ENCODE measurements at regions of chr1 and their contacts with region 1.

Region 1: DNA sequence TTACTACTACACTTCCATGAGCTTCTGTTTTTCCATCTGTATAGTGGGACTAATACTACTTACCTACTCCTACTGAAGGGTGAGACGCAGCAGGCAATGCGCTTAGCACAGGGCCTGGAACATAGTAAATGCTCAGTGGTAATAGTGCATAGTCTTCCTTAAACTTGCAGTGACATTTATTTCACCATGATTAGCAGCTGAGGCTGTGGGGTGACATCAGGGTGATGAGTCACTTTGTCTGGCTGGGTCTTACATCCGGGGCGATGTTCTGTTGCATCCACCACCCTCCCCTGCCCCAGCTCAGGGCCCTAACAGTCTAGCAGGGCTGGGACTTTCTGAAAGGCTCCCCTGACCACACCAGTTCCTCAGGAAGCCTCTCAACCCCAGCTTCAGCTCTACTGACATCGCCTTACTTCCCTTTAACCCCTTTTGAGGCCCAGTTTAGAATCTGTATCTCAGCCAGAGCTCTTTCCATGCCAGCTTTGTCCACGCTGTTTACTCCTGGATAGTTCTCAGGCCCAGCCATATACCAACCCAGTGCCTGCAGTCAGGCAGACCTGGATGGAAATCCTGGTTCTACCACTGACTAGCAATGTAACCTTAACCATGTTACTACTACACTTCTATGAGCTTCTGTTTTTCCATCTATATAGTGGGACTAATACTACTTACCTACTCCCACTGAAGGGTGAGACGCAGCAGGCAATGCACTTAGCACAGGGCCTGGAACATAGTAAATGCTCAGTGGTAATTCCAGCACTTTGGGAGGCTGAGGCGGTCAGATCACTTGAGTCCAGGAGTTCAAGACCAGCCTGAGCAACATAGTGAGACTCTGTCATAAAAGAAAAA is 66.3 kb downstream of the CD58 start:
- H3K4me3 Mint-ChIP-seq: no peak overlapping the region
- H3K27ac Mint-ChIP-seq: peak overlapping the region; percentile 87
- H3K4me1 Mint-ChIP-seq: peaks cover 71% of the 10 kb centered on the region
- H3K27me3 Mint-ChIP-seq: no peaks in the 10 kb centered on the region

Region 2: DNA sequence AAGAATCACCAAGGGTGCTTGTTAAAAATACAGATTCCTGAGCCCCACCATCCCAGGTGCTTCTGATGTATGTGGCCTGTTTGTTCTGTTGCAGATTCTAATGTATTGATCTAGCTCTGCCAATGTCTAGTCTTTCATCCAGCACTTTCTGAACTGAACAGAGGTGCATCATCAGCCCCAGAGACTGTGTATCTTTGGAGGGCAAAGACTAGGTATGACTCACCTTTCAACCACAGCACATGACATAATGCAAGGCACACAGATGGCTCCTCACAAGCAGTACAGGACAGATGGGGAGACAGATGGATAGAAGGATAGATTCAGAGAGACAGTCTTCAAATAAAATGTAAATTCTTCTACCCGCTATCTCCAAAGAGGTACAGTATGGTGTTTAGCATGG is 34.0 kb after region 1 on chr1:
- intact Hi-C with region 1: loop called (anchors 5 kb)
- H3K4me3 Mint-ChIP-seq: no peak overlapping the region
- H3K27ac Mint-ChIP-seq: peak overlapping the region; percentile 77
- H3K4me1 Mint-ChIP-seq: peaks cover 62% of the 10 kb centered on the region
- H3K27me3 Mint-ChIP-seq: no peaks in the 10 kb centered on the region

Region 3: DNA sequence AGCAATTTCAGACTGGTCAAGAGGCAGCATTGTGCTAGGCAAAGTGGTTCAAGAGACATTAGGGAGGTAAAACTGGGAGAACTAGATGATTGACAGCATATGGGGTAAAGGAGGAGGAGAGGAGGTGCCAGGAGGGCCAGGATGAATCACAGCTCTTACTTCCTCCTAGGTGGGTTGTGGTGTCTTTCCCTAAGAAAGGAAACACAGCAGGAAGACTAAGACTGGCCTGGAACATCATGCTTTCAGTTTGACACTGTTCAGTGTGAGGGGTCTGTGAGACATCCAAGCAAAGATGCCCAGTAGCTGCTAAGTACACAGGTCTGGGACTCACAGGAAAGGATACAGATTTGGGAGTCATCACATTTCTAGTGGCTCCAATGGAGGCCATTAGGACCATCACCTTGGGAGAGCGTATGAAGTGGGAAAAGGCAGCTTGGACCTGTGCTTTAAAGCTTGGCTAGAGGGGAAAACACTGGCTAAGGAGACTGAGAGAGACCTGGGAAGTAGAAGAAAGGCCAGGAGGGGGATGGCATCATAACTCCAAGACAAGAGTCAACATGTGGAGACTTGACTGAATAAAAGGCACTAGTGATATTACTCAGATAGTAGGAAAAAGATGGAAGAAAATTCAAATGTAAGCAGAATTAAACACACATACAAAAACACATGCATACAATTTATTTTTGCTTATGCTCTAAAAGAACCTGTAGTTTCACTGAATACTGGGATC is 49.0 kb after region 1 on chr1:
- intact Hi-C with region 1: loop called (anchors 5 kb)
- H3K4me3 Mint-ChIP-seq: peak overlapping the region; percentile 45
- H3K27ac Mint-ChIP-seq: peak overlapping the region; percentile 81
- H3K4me1 Mint-ChIP-seq: peaks cover 69% of the 10 kb centered on the region
- H3K27me3 Mint-ChIP-seq: no peaks in the 10 kb centered on the region